WTC11 (cell line): ENCODE measurements at regions of chr6 and their contacts with region 1.

Region 1: DNA sequence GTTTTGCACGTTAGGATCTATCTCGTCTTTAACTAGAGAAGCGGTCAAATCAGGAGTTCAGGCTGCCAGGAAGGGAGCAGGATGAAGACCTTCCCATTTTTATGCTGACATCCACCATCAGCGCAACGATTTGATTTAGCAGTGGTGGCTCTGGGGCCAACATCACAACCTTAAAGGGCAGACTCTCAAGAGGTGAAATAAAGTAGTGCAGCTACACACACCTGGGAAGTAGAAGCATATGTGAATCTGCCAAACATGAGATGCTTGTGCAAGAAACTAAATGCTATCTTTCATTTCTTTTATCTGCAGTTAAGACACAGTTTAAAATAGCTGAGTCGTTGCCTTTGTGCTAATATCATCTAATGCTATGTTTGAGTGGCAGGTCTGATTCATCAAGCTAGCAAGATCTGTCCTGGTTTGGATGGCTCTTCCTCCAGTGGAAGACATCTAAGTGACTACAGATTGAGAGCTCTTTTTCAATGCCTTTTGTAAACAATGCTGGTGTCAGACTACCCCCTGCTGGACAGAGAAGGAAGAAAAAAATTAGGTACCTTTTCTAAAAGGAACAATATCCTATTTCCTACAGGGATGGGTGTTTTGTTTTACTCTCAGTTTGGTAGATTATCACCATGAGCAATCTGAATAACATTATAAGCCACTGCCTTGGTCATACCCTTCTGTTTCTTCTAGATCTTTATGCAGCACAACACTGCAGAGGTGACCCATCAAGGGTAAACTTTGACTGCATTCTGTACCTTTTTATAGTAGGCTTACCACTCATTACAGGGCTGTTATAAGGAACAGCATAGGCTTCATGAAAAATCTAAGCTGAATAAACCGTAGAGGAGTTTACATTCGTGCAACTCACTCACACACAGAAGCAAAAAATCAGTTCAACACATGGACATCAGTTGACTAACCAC is 171.6 kb upstream of the FBXL4 start:
- DNase-seq: no peak
- ATAC-seq: peak; percentile 85
- H3K4me3 Mint-ChIP-seq: no peak overlapping the region
- H3K27ac Mint-ChIP-seq: no peak overlapping the region
- H3K4me1 Mint-ChIP-seq: peaks cover 3% of the 10 kb centered on the region
- H3K27me3 Mint-ChIP-seq: no peaks in the 10 kb centered on the region
- CTCF ChIP-seq: peak; percentile 82

Region 2: GRCh38 chr6:98834060-98835031 is 285.0 kb before region 1 on chr6 and contains the start of gene POU3F2:
- CTCF ChIA-PET with region 1: interaction called, 10 read pairs
- POLR2A ChIA-PET with region 1: no interaction called
- DNase-seq: peak; percentile 94
- ATAC-seq: peak; percentile 61
- H3K4me3 Mint-ChIP-seq: peak within 1 kb of the TSS; percentile 76
- H3K27ac Mint-ChIP-seq: no peak within 1 kb of the TSS
- H3K4me1 Mint-ChIP-seq: peaks cover 58% of the 10 kb centered on the region
- H3K27me3 Mint-ChIP-seq: peaks cover 97% of the 10 kb centered on the region
- CTCF ChIP-seq: no peak
- total RNA-seq, gene POU3F2: 0.07 to 0.14 TPM (median 0.14 TPM) in 3 replicates

Region 3: GRCh38 chr6:98845211-98846020 is 274.0 kb before region 1 on chr6:
- CTCF ChIA-PET with region 1: interaction called, 17 read pairs
- POLR2A ChIA-PET with region 1: no interaction called
- DNase-seq: peak; percentile 91
- ATAC-seq: peak; percentile 53
- H3K4me3 Mint-ChIP-seq: peak overlapping the region; percentile 73
- H3K27ac Mint-ChIP-seq: no peak overlapping the region
- H3K4me1 Mint-ChIP-seq: peaks cover 47% of the 10 kb centered on the region
- H3K27me3 Mint-ChIP-seq: peaks cover 100% of the 10 kb centered on the region
- CTCF ChIP-seq: peak; percentile 73

Region 4: GRCh38 chr6:98980814-98981213 is 138.6 kb before region 1 on chr6:
- CTCF ChIA-PET with region 1: interaction called, 22 read pairs
- POLR2A ChIA-PET with region 1: no interaction called
- DNase-seq: peak; percentile 38
- ATAC-seq: peak; percentile 99
- H3K4me3 Mint-ChIP-seq: no peak overlapping the region
- H3K27ac Mint-ChIP-seq: no peak overlapping the region
- H3K4me1 Mint-ChIP-seq: peaks cover 9% of the 10 kb centered on the region; the same call in 1 of the 2 replicates
- H3K27me3 Mint-ChIP-seq: no peaks in the 10 kb centered on the region
- CTCF ChIP-seq: no peak

Region 5: DNA sequence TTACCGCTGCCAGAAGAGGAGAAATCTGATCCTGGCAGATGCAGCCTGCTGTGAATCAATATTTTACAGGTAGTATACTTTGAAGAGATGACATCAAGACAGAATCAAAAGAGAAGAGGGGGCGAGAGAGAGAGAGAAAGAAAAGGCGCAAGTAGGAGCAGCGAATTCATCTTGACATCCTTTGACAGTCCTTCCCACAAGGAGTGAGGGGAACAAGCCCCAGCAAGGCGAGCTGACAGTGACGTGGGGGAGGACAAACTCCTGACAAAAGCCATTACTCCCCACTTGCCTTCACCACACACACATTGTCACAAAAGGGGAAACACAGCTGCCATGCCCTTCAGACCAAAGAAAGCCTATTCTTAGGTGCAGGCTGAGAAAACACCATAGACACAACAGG is 25.6 kb before region 1 on chr6:
- CTCF ChIA-PET with region 1: interaction called, 17 read pairs
- POLR2A ChIA-PET with region 1: no interaction called
- DNase-seq: no peak
- ATAC-seq: no peak
- H3K4me3 Mint-ChIP-seq: no peak overlapping the region
- H3K27ac Mint-ChIP-seq: no peak overlapping the region
- H3K4me1 Mint-ChIP-seq: peaks cover 7% of the 10 kb centered on the region
- H3K27me3 Mint-ChIP-seq: peaks cover 9% of the 10 kb centered on the region; the same call in 1 of the 2 replicates
- CTCF ChIP-seq: no peak

Region 6: DNA sequence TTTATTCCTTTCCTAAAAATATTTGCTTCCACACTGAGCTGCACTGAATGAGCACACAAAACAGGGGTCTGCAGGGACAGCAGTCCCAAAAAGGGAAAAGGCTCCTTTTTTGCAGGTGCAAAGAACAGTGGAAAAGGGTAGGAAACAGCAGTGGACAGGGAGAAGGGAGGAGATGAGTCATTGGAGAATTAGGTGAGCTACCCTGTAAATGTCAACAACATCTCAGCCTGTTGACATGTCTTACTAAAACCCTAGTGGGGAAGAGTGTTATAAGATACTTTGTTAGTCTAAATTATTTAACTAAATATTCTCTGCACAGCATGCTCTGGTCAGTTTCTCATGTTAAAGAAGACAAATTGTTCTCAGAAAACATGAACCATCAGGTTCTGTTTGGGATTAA is 20.1 kb before region 1 on chr6:
- CTCF ChIA-PET with region 1: interaction called, 17 read pairs
- POLR2A ChIA-PET with region 1: no interaction called
- DNase-seq: no peak
- ATAC-seq: no peak
- H3K4me3 Mint-ChIP-seq: no peak overlapping the region
- H3K27ac Mint-ChIP-seq: no peak overlapping the region
- H3K4me1 Mint-ChIP-seq: peaks cover 6% of the 10 kb centered on the region
- H3K27me3 Mint-ChIP-seq: peaks cover 6% of the 10 kb centered on the region; the same call in 1 of the 2 replicates
- CTCF ChIP-seq: no peak

Region 7: GRCh38 chr6:99241905-99242534 is 122.7 kb after region 1 on chr6:
- CTCF ChIA-PET with region 1: interaction called, 19 read pairs
- POLR2A ChIA-PET with region 1: no interaction called
- DNase-seq: peak; percentile 37
- ATAC-seq: peak; percentile 61
- H3K4me3 Mint-ChIP-seq: no peak overlapping the region
- H3K27ac Mint-ChIP-seq: no peak overlapping the region
- H3K4me1 Mint-ChIP-seq: peaks cover 5% of the 10 kb centered on the region; the same call in 1 of the 2 replicates
- H3K27me3 Mint-ChIP-seq: no peaks in the 10 kb centered on the region
- CTCF ChIP-seq: peak; percentile 38; the same call in 1 of the 2 replicates